ENCODE measurements at regions of chr11 and their contacts with region 1.

Region 1: DNA sequence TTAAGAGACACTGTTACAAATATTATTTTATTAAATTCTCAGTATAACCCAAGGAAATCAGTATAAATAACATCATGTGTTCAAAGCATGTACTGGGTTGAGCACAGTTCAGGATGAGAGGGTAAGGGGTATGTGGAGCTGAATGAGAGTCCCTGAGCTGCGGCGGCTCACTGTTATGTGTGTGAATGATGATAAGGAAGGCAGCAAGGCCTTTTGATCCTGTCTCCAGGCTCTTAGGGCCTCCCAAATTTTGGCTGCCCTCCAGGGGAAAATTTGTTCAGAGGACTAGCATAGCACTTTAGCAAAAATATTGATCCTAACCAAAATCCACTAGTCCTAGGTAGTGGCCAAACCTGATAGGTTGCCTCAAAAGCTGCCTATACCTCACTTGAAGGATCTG is 86.1 kb upstream of the SPON1 start:
- DNase-seq: no peak
- ATAC-seq: no peak
- H3K4me3 ChIP-seq: no peak overlapping the region
- H3K27ac ChIP-seq: no peak overlapping the region
- H3K4me1 ChIP-seq: no peaks in the 10 kb centered on the region; the same call in 1 of the 2 replicates
- H3K27me3 ChIP-seq: no peaks in the 10 kb centered on the region
- CTCF ChIP-seq: no peak

Region 2: GRCh38 chr11:13261591-13262061 is 614.8 kb before region 1 on chr11:
- CTCF ChIA-PET with region 1: no interaction called
- POLR2A ChIA-PET with region 1: no interaction called
- in situ Hi-C with region 1: no loop called
- intact Hi-C with region 1: no loop called
- DNase-seq: peak; percentile 82
- ATAC-seq: peak; percentile 86
- H3K4me3 ChIP-seq: no peak overlapping the region
- H3K27ac ChIP-seq: no peak overlapping the region
- H3K4me1 ChIP-seq: peaks cover 10% of the 10 kb centered on the region
- H3K27me3 ChIP-seq: peaks cover 6% of the 10 kb centered on the region
- CTCF ChIP-seq: no peak

Region 3: DNA sequence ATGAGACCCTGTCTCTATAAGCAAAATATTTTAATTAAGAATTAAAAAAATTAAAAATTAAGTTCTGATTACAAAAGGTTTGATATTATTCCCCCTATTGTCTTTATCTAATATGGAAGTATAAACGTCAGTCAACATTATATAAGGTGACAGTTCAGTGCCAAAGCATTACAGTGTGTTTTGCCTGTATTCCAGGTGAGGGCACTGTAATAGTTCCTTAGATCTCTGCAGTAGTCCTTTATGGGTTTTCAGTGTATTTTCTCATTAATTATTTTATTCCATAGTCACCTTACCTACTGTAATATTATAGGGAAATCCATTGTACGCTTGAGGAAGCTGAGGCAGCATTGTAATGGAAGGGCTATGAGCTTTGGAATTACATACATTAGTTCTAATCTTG is 174.9 kb before region 1 on chr11:
- CTCF ChIA-PET with region 1: no interaction called
- POLR2A ChIA-PET with region 1: no interaction called
- in situ Hi-C with region 1: no loop called
- intact Hi-C with region 1: no loop called
- DNase-seq: no peak
- ATAC-seq: no peak
- H3K4me3 ChIP-seq: no peak overlapping the region
- H3K27ac ChIP-seq: no peak overlapping the region
- H3K4me1 ChIP-seq: no peaks in the 10 kb centered on the region
- H3K27me3 ChIP-seq: no peaks in the 10 kb centered on the region
- CTCF ChIP-seq: peak; percentile 26; the same call in 1 of the 2 replicates

Region 4: DNA sequence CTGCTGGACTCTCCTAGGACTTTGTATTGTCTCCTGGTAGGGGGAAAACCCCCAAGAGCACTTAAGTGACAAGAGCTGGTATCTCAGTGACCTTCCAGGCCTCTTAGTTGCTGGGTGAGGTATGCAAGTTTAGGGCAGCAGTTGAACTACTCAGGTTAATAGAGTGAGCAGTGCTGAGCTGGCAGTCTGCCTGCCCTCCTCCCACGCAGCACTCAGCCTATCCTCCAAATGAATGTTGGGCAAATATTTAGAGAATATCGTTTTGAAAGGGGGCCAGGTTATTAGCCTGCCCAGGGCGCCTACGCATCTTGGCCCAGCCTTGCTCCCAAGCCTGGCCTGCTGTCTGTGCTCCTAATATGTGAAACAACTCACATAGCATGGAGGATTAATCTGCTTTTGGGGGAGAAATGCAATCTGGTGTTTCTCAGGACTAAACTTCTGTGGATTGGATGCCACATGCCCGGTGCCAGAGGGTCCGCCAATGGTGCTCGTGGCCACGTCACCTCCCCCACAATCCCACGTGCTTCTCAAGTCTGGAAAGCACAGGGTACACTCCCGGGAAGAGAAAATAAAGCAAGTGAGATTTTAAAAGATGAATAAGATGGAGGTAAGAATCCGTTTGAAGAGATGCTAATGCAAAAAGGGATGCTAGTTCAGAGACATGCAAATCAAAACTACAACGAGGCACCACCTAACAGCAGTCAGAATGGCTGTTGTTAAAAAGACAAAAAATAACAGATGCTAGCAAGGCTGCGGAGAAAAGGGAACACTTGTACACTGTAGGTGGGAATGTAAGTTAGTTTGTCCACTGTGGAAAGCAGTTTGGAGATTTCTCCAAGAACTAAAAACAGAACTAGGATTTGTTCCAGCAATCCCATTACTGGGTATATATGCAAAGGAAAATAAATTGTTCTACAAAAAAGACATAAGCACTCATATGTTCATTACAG is 153.8 kb after region 1 on chr11:
- CTCF ChIA-PET with region 1: no interaction called
- POLR2A ChIA-PET with region 1: interaction called, 11 read pairs
- in situ Hi-C with region 1: no loop called
- intact Hi-C with region 1: no loop called
- DNase-seq: no peak
- ATAC-seq: 0 out of 2 replicates have a peak, but pooled peaks have one; percentile 58
- H3K4me3 ChIP-seq: no peak overlapping the region
- H3K27ac ChIP-seq: no peak overlapping the region
- H3K4me1 ChIP-seq: no peaks in the 10 kb centered on the region; the same call in 1 of the 2 replicates
- H3K27me3 ChIP-seq: no peaks in the 10 kb centered on the region
- CTCF ChIP-seq: no peak

Region 5: GRCh38 chr11:14554959-14555358 is 678.5 kb after region 1 on chr11:
- CTCF ChIA-PET with region 1: no interaction called
- POLR2A ChIA-PET with region 1: no interaction called
- in situ Hi-C with region 1: no loop called
- intact Hi-C with region 1: no loop called
- DNase-seq: no peak
- ATAC-seq: no peak
- H3K4me3 ChIP-seq: no peak overlapping the region
- H3K27ac ChIP-seq: no peak overlapping the region
- H3K4me1 ChIP-seq: no peaks in the 10 kb centered on the region
- H3K27me3 ChIP-seq: no peaks in the 10 kb centered on the region
- CTCF ChIP-seq: no peak

Measured in Panc1 (cell line).